ENCODE measurements at regions of chr15 and their contacts with region 1.

Region 1: DNA sequence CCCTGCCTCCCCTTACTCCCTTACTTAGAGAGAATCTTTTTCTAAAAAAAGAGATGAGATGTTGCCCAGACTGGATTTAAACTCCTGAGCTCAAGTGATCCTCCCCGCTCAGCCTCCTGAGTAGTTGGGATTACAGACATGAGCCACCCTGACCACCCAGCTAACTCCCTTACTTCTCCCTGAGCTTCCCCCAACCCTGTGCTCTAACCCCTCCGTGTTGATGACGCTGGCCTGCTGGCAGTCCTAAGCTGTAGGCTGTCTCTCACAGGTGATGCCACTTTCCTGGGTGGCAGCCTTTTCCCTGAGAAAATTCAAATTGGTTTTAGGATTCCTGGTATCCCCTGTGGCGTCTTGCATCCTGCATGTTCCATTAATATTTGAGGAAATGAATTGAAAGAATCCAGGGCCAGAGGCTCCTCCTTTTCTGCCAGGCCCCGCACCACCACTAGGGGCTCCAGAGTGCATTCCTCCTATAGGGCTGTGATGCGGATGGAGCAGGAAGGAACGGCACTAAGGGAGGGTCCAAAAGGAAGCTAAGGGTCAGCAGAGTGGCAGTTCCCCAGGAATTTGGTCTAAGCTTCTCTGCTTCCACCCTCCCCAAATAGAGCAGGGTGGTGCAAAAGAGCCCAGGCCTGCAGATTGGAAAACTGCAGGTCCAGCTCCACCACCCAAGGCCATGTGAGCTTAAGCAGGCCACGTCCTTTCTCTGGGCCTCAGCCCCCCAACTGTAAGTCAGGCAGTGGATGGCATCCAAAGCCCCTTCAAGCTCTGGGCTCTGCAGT is 101.1 kb downstream of the DAPK2 start:
- DNase-seq: peak; percentile 80
- ATAC-seq: peak; percentile 87
- H3K4me3 Mint-ChIP-seq: no peak overlapping the region
- H3K27ac Mint-ChIP-seq: no peak overlapping the region
- H3K4me1 Mint-ChIP-seq: peaks cover 14% of the 10 kb centered on the region
- H3K27me3 Mint-ChIP-seq: no peaks in the 10 kb centered on the region

Region 2: GRCh38 chr15:63891079-63891767 is 54.0 kb before region 1 on chr15:
- CTCF ChIA-PET with region 1: interaction called, 19 read pairs
- POLR2A ChIA-PET with region 1: no interaction called
- DNase-seq: peak; percentile 80
- ATAC-seq: peak; percentile 28
- H3K4me3 Mint-ChIP-seq: peak overlapping the region; percentile 25
- H3K27ac Mint-ChIP-seq: peak overlapping the region; percentile 86
- H3K4me1 Mint-ChIP-seq: peaks cover 65% of the 10 kb centered on the region
- H3K27me3 Mint-ChIP-seq: no peaks in the 10 kb centered on the region

Region 3: GRCh38 chr15:63915873-63916771 is 29.1 kb before region 1 on chr15:
- CTCF ChIA-PET with region 1: interaction called, 20 read pairs
- POLR2A ChIA-PET with region 1: no interaction called
- DNase-seq: no peak
- ATAC-seq: no peak
- H3K4me3 Mint-ChIP-seq: no peak overlapping the region
- H3K27ac Mint-ChIP-seq: no peak overlapping the region
- H3K4me1 Mint-ChIP-seq: peaks cover 17% of the 10 kb centered on the region
- H3K27me3 Mint-ChIP-seq: no peaks in the 10 kb centered on the region

Region 4: GRCh38 chr15:63970621-63971426 is 25.6 kb after region 1 on chr15:
- CTCF ChIA-PET with region 1: interaction called, 53 read pairs
- POLR2A ChIA-PET with region 1: interaction called, 6 read pairs
- DNase-seq: peak; percentile 44
- ATAC-seq: peak; percentile 76
- H3K4me3 Mint-ChIP-seq: peak overlapping the region; percentile 68
- H3K27ac Mint-ChIP-seq: peak overlapping the region; percentile 96
- H3K4me1 Mint-ChIP-seq: peaks cover 44% of the 10 kb centered on the region
- H3K27me3 Mint-ChIP-seq: no peaks in the 10 kb centered on the region

Region 5: GRCh38 chr15:64004582-64004981 is 59.4 kb after region 1 on chr15:
- CTCF ChIA-PET with region 1: interaction called, 12 read pairs
- POLR2A ChIA-PET with region 1: no interaction called
- DNase-seq: no peak
- ATAC-seq: no peak
- H3K4me3 Mint-ChIP-seq: no peak overlapping the region
- H3K27ac Mint-ChIP-seq: no peak overlapping the region
- H3K4me1 Mint-ChIP-seq: peaks cover 21% of the 10 kb centered on the region
- H3K27me3 Mint-ChIP-seq: peaks cover 13% of the 10 kb centered on the region

Region 6: DNA sequence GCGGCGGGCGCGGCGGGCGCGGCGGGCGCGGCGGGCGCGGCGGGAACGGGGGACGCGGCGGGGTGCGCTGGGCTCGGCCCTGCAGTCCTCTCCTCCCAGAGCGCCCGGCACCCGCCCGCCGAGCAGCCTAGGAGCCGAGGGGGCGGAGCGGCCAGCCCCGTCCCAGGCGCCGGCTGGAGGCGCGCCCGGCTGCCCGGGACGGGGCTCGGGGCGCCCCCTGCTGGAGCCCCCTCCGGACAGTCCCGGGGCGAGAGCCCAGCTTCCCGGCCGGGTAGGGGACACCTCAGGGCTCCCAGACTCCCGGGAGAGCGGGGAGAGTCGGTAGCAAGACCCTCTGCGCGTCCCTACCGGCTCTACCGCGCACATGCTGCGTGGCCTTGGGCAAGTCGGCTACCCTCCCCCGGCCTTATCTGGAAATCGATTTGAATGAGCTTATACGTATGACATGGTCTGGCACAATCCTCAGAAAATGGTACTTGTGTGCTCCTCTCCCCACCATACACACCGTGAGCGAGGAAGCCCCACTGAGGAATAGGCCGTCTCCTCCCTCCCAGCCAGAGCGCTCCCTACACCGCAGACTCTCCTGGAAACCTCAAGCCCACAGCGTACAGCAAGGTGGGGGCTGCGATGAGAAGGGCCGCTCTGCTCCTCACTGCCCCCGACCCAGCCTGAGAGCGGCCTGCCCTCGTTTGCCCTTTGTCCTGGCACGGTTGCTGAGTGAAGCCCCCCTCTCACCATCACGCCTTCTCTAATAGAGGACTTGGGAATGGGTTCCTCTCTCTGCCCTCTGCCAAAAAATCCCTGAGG is 101.4 kb after region 1 on chr15 and contains the start of gene DAPK2:
- CTCF ChIA-PET with region 1: interaction called, 34 read pairs
- POLR2A ChIA-PET with region 1: no interaction called
- DNase-seq: peak; percentile 62
- ATAC-seq: peak; percentile 95
- H3K4me3 Mint-ChIP-seq: peak within 1 kb of the TSS; percentile 70
- H3K27ac Mint-ChIP-seq: peak within 1 kb of the TSS; percentile 31
- H3K4me1 Mint-ChIP-seq: peaks cover 13% of the 10 kb centered on the region
- H3K27me3 Mint-ChIP-seq: peaks cover 34% of the 10 kb centered on the region
- total RNA-seq, gene DAPK2: 1.3 to 1.5 TPM

Measured in activated CD8-positive, alpha-beta T cell treated with anti-CD3 and anti-CD28 coated beads, Interleukin-2, amount 10 ng/mL, durations not matched to agents 7 days and 5 days (primary cell).